CD4-positive, alpha-beta T cell (primary cell): ENCODE measurements at regions of chr14 and their contacts with region 1.

Region 1: DNA sequence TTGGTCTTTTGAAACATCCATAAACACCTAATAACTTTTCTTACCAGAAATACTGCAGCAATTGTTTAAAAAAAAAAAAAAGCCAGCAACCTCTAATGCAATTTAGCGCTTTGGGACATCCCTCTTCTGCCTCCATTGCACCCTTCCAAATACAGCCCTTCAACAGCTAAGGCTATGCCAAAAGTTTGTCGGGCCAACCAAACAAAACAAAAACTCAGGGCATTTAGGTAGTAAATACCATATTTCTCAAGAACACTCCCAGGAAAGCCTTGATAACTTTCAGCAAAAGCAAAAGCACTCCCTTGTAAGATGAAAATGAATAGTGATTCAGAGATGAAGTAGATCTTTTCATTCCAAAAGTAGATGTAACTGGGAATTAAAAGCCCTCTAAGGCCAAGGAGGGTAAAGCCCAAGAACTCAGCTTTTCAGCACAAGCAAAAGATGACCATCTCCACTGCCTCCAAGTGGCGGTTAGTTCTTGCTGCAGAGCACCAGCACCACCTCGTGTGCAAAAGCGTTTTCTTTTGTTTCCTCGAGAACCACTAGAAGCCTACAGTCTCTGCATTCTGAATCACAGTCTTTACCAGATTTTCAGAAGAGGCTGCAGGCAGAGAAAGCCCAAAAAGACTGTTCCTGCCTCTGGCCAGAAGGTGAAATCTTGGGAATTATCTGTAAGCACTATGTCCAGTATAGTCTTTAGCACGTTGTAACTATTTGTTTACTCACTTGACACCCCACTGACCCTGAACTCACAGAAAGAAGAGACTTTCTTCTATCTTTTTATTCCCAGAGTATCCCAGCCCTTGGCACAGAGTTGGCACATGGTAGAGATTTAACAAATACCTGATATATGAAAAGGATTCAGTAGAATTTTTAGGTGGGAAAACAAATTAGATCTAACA is 53.1 kb downstream of the SIX6 start:
- DNase-seq: peak in 4 of 14 experiments; percentile 6 to 35 (median 16)
- ATAC-seq: no peak
- H3K4me3 ChIP-seq: no peak overlapping the region
- H3K4me3 Mint-ChIP-seq: no peak overlapping the region
- H3K27ac ChIP-seq: no peak overlapping the region
- H3K27ac Mint-ChIP-seq: no peak overlapping the region
- H3K4me1 ChIP-seq: no peaks in the 10 kb centered on the region
- H3K4me1 Mint-ChIP-seq: no peaks in the 10 kb centered on the region
- H3K27me3 ChIP-seq: peaks cover 3 to 6% of the 10 kb centered on the region in 2 experiments
- H3K27me3 Mint-ChIP-seq: peaks cover 8% of the 10 kb centered on the region
- CTCF ChIP-seq: no peak

Region 2: GRCh38 chr14:60064491-60065072 is 497.5 kb before region 1 on chr14:
- CTCF ChIA-PET with region 1: no interaction called
- POLR2A ChIA-PET with region 1: no interaction called
- intact Hi-C with region 1: loop called in 1 of 2 experiments (anchors 10 kb)
- DNase-seq: peak in 3 of 14 experiments; percentile 60 to 65 (median 60)
- ATAC-seq: peak; percentile 41
- H3K4me3 ChIP-seq: no peak overlapping the region
- H3K4me3 Mint-ChIP-seq: no peak overlapping the region
- H3K27ac ChIP-seq: no peak overlapping the region
- H3K27ac Mint-ChIP-seq: no peak overlapping the region
- H3K4me1 ChIP-seq: no peaks in the 10 kb centered on the region
- H3K4me1 Mint-ChIP-seq: no peaks in the 10 kb centered on the region
- H3K27me3 ChIP-seq: peaks cover 0 to 3% of the 10 kb centered on the region in 2 experiments
- H3K27me3 Mint-ChIP-seq: peaks cover 18% of the 10 kb centered on the region
- CTCF ChIP-seq: peak; percentile 65

Region 3: GRCh38 chr14:60189923-60190840 is 371.9 kb before region 1 on chr14:
- CTCF ChIA-PET with region 1: no interaction called
- POLR2A ChIA-PET with region 1: no interaction called
- intact Hi-C with region 1: loop called (anchors 5 kb)
- DNase-seq: no peak
- ATAC-seq: no peak
- H3K4me3 ChIP-seq: no peak overlapping the region
- H3K4me3 Mint-ChIP-seq: no peak overlapping the region
- H3K27ac ChIP-seq: no peak overlapping the region
- H3K27ac Mint-ChIP-seq: no peak overlapping the region
- H3K4me1 ChIP-seq: no peaks in the 10 kb centered on the region
- H3K4me1 Mint-ChIP-seq: no peaks in the 10 kb centered on the region
- H3K27me3 ChIP-seq: no peaks in the 10 kb centered on the region
- H3K27me3 Mint-ChIP-seq: peaks cover 4% of the 10 kb centered on the region
- CTCF ChIP-seq: no peak

Region 4: DNA sequence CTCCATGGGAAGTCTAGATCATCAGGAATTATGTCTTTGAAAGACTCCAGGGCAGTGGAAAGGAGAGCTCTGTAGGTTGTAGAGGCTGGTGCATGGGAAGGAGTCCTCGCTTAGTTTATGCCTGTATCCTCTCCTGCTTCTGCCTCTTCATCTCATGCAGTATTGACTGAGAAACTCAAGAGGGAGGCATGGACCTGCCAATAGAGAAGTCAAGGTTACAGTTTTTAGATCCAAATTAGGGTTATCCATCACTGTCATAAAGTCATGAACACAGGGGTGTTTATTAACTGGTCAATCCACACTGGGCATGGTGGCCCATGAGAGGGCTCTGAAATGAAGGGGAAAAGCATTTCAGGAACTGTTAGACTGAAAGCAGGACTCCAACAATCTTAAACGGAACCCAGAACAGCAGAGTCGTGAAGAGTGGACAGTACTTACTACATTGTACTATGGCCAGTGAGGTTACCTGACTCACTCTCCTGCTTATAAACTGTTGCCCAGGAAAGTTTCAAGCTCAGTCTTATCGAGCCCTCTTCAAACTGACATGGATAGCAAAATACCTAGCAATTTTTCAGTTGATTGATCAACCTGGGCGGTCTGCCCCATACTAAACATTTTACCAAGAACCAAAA is 366.8 kb before region 1 on chr14:
- CTCF ChIA-PET with region 1: no interaction called
- POLR2A ChIA-PET with region 1: no interaction called
- intact Hi-C with region 1: loop called (anchors 5 kb)
- DNase-seq: peak in 3 of 14 experiments; percentile 7 to 31 (median 30)
- ATAC-seq: peak; percentile 68
- H3K4me3 ChIP-seq: no peak overlapping the region
- H3K4me3 Mint-ChIP-seq: no peak overlapping the region
- H3K27ac ChIP-seq: no peak overlapping the region
- H3K27ac Mint-ChIP-seq: no peak overlapping the region
- H3K4me1 ChIP-seq: no peaks in the 10 kb centered on the region
- H3K4me1 Mint-ChIP-seq: no peaks in the 10 kb centered on the region
- H3K27me3 ChIP-seq: no peaks in the 10 kb centered on the region
- H3K27me3 Mint-ChIP-seq: peaks cover 11% of the 10 kb centered on the region
- CTCF ChIP-seq: no peak

Region 5: GRCh38 chr14:60349663-60350365 is 212.3 kb before region 1 on chr14:
- CTCF ChIA-PET with region 1: no interaction called
- POLR2A ChIA-PET with region 1: no interaction called
- intact Hi-C with region 1: loop called (anchors 1 to 5 kb)
- DNase-seq: peak in 6 of 14 experiments; percentile 4 to 63 (median 33)
- ATAC-seq: peak; percentile 34
- H3K4me3 ChIP-seq: no peak overlapping the region
- H3K4me3 Mint-ChIP-seq: no peak overlapping the region
- H3K27ac ChIP-seq: no peak overlapping the region
- H3K27ac Mint-ChIP-seq: no peak overlapping the region
- H3K4me1 ChIP-seq: no peaks in the 10 kb centered on the region
- H3K4me1 Mint-ChIP-seq: peaks cover 12% of the 10 kb centered on the region
- H3K27me3 ChIP-seq: no peaks in the 10 kb centered on the region
- H3K27me3 Mint-ChIP-seq: peaks cover 19% of the 10 kb centered on the region
- CTCF ChIP-seq: peak; percentile 75